ENCODE measurements at regions of chr6 and their contacts with region 1.

Region 1: DNA sequence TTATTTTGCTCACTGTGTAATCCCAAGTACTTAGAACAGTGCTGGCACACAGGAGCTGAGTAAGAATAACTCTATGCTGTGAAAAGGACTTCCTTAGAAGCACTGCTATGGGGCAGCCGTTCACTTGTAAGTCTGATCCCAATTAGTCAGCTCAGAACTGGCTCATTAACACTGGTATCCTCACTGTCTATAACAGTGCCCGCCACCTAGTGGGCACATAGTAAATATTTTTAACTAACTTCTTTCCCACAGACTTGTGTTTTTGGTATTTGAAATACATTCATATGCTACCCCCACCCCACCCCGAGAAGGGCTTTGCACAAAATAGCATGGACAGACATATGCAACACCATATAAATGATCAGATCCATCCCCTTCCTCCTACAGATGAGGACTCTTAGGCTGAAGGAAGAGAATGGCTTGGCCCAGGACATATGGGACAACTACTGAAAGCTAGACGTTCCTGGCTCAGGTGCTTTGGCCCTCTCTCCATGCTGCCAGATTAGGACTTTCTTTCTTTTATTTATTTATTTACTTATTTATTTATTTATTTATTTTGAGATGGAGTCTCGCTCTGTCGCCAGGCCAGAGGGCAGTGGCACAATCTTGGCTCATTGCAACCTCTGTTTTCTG is 47.1 kb downstream of the DST start:
- DNase-seq: peak; percentile 44
- ATAC-seq: peak; percentile 43
- H3K4me3 ChIP-seq: no peak overlapping the region
- H3K4me3 Mint-ChIP-seq: no peak overlapping the region
- H3K27ac ChIP-seq: no peak overlapping the region
- H3K27ac Mint-ChIP-seq: no peak overlapping the region
- H3K4me1 ChIP-seq: peaks cover 8 to 15% of the 10 kb centered on the region in 2 donors
- H3K4me1 Mint-ChIP-seq: peaks cover 26% of the 10 kb centered on the region
- H3K27me3 ChIP-seq: no peaks in the 10 kb centered on the region
- H3K27me3 Mint-ChIP-seq: no peaks in the 10 kb centered on the region
- CTCF ChIP-seq: peak; percentile 76

Region 2: GRCh38 chr6:56359201-56359899 is 236.3 kb before region 1 on chr6:
- CTCF ChIA-PET with region 1: interaction called, 16 read pairs
- POLR2A ChIA-PET with region 1: no interaction called
- intact Hi-C with region 1: loop called (anchors 1 kb)
- DNase-seq: peak; percentile 64
- ATAC-seq: peak; percentile 56
- H3K4me3 ChIP-seq: no peak overlapping the region
- H3K4me3 Mint-ChIP-seq: no peak overlapping the region
- H3K27ac ChIP-seq: no peak overlapping the region
- H3K27ac Mint-ChIP-seq: no peak overlapping the region
- H3K4me1 ChIP-seq: no peaks in the 10 kb centered on the region
- H3K4me1 Mint-ChIP-seq: no peaks in the 10 kb centered on the region
- H3K27me3 ChIP-seq: no peaks in the 10 kb centered on the region
- H3K27me3 Mint-ChIP-seq: no peaks in the 10 kb centered on the region
- CTCF ChIP-seq: peak; percentile 95

Region 3: GRCh38 chr6:56364827-56365313 is 230.7 kb before region 1 on chr6:
- CTCF ChIA-PET with region 1: interaction called, 10 read pairs
- POLR2A ChIA-PET with region 1: no interaction called
- intact Hi-C with region 1: no loop called
- DNase-seq: no peak
- ATAC-seq: no peak
- H3K4me3 ChIP-seq: no peak overlapping the region
- H3K4me3 Mint-ChIP-seq: no peak overlapping the region
- H3K27ac ChIP-seq: no peak overlapping the region
- H3K27ac Mint-ChIP-seq: no peak overlapping the region
- H3K4me1 ChIP-seq: no peaks in the 10 kb centered on the region
- H3K4me1 Mint-ChIP-seq: peaks cover 1% of the 10 kb centered on the region
- H3K27me3 ChIP-seq: no peaks in the 10 kb centered on the region
- H3K27me3 Mint-ChIP-seq: peaks cover 11% of the 10 kb centered on the region
- CTCF ChIP-seq: no peak

Region 4: GRCh38 chr6:56575736-56576135 is 19.9 kb before region 1 on chr6:
- CTCF ChIA-PET with region 1: interaction called, 10 read pairs
- POLR2A ChIA-PET with region 1: no interaction called
- intact Hi-C with region 1: no loop called
- DNase-seq: no peak
- ATAC-seq: no peak
- H3K4me3 ChIP-seq: no peak overlapping the region
- H3K4me3 Mint-ChIP-seq: no peak overlapping the region
- H3K27ac ChIP-seq: no peak overlapping the region
- H3K27ac Mint-ChIP-seq: no peak overlapping the region
- H3K4me1 ChIP-seq: no peaks in the 10 kb centered on the region
- H3K4me1 Mint-ChIP-seq: no peaks in the 10 kb centered on the region
- H3K27me3 ChIP-seq: no peaks in the 10 kb centered on the region
- H3K27me3 Mint-ChIP-seq: no peaks in the 10 kb centered on the region
- CTCF ChIP-seq: no peak

Region 5: GRCh38 chr6:56613247-56613851 is 17.7 kb after region 1 on chr6:
- CTCF ChIA-PET with region 1: interaction called, 15 read pairs
- POLR2A ChIA-PET with region 1: no interaction called
- intact Hi-C with region 1: no loop called
- DNase-seq: no peak
- ATAC-seq: no peak
- H3K4me3 ChIP-seq: no peak overlapping the region
- H3K4me3 Mint-ChIP-seq: no peak overlapping the region
- H3K27ac ChIP-seq: no peak overlapping the region
- H3K27ac Mint-ChIP-seq: no peak overlapping the region
- H3K4me1 ChIP-seq: no peaks in the 10 kb centered on the region
- H3K4me1 Mint-ChIP-seq: no peaks in the 10 kb centered on the region
- H3K27me3 ChIP-seq: no peaks in the 10 kb centered on the region
- H3K27me3 Mint-ChIP-seq: no peaks in the 10 kb centered on the region
- CTCF ChIP-seq: no peak

Measured in B cell (primary cell).